ENCODE measurements at regions of chr2 and their contacts with region 1.

Region 1: GRCh38 chr2:227228061-227228667 is 63.7 kb downstream of the COL4A3 start:
- DNase-seq: peak; percentile 91 to 97
- ATAC-seq: peak; percentile 92 to 98 (median 97)
- H3K4me3 ChIP-seq: no peak overlapping the region
- H3K27ac ChIP-seq: peak overlapping the region; percentile 86
- H3K4me1 ChIP-seq: peaks cover 21% of the 10 kb centered on the region
- H3K27me3 ChIP-seq: no peaks in the 10 kb centered on the region
- CTCF ChIP-seq: no peak

Region 2: GRCh38 chr2:227188292-227188691 is 39.9 kb before region 1 on chr2:
- intact Hi-C with region 1: loop called in 1 of 2 experiments (anchors 5 kb)
- DNase-seq: no peak
- ATAC-seq: peak; percentile 86 to 91 (median 90)
- H3K4me3 ChIP-seq: peak overlapping the region; percentile 17
- H3K27ac ChIP-seq: peak overlapping the region; percentile 92
- H3K4me1 ChIP-seq: peaks cover 60% of the 10 kb centered on the region
- H3K27me3 ChIP-seq: no peaks in the 10 kb centered on the region
- CTCF ChIP-seq: no peak